Activated B cell treated with CpG ODN at 0.5 μM for 24 hours (primary cell): ENCODE measurements at regions of chr20 and their contacts with region 1.

Region 1: DNA sequence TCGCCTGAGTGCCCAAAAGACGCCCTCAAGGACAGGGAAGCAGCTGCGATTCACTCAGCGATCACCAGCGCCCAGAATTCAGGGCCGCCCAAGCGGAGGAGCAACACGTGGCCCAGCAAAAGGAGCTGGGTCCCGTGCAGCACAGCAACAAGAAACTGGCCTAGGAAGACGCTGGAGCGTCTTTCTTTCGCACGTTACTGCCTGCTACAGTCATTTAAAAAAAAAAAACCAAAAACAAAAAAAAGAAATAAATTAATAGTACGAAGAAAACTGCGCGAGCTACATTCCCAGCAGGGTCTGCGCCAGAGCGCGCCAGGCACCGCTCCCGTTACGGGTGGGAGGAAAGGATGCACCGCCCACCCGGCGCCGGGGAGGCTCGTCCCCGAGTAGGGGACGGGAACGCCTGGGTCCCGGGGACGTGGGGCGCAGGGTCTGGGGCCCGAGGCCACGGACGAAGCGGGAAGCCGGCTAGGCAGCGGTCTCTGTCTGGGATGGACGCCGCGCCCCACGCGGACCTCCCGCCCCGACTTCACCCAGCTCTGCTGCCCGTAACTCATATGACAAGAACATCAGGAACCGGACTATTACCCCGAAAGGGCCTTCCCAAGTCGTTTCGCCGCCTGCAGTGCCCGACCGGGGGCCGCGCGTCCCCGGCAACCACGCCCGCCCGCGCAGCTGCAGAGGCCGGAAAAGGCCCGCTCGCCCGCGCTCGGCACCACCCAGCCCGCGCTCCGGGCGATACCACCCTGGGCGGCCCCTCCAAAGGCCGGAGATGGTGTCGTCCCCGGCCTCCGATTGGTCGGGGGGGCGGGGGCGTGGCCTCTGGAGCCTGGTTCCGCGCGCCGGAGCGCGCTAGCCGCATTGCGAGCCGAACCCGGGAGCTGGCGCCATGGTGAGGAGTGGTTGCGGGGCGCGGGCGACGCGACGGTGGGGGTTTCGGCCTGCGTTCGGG is at the start of gene NOP56:
- DNase-seq: peak; percentile 97
- ATAC-seq: peak; percentile 90
- H3K4me3 Mint-ChIP-seq: peak within 1 kb of the TSS; percentile 90
- H3K27ac Mint-ChIP-seq: peak within 1 kb of the TSS; percentile 93
- H3K4me1 Mint-ChIP-seq: peaks cover 19% of the 10 kb centered on the region
- H3K27me3 Mint-ChIP-seq: no peaks in the 10 kb centered on the region
- CTCF ChIP-seq: no peak
- total RNA-seq, gene NOP56: 327 and 333 TPM in 2 replicates

Region 2: GRCh38 chr20:1466211-1467081 is 1185.6 kb before region 1 on chr20 and contains the start of gene NSFL1C:
- CTCF ChIA-PET with region 1: no interaction called
- POLR2A ChIA-PET with region 1: interaction called, 3 read pairs
- intact Hi-C with region 1: loop called (anchors 10 kb)
- DNase-seq: peak; percentile 100
- ATAC-seq: peak; percentile 92
- H3K4me3 Mint-ChIP-seq: peak within 1 kb of the TSS; percentile 86
- H3K27ac Mint-ChIP-seq: peak within 1 kb of the TSS; percentile 89
- H3K4me1 Mint-ChIP-seq: peaks cover 81% of the 10 kb centered on the region
- H3K27me3 Mint-ChIP-seq: no peaks in the 10 kb centered on the region
- CTCF ChIP-seq: peak; percentile 93
- total RNA-seq, gene NSFL1C: 81.7 and 89.4 TPM in 2 replicates

Region 3: DNA sequence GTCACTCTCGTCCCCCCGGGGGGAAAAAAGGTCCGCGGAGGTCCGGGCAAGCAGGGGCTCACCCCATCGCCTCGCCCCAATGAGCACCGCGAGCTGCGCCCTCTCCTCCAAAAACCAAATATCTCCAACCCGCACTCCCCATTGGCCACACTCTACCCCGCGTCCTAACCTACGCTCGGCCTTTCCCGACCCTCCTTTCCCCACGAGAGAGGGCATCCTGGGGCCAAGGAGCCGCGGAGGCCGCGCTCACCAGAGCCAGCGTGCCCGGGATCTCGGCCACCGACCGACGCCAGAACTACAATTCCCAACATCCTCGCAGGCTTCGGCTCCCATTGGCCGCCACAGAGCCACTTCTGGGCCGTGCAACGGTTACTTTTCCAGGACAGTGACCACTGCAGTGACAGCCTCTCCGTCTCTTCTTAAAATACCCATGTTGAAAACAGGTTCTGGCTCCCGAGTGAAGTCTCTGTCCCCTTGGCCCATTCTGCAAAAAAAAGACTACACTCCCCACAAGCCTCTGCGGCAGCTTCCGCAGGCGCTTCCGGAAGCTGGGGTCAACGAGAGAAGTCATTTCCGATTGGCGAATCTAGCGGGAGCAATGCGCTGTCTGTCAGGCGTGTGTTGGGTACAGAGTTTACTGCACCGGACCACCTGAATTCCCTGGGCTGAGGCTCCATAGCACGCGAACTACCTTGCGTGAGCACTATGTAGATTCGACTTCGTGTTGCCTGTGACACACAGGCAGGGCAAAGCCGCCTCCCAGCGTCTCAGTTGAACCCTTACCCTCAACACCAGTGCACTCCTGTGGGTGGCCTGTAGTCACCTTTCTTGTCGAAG is 143.2 kb before region 1 on chr20 and contains the start of gene ZNF343:
- CTCF ChIA-PET with region 1: no interaction called
- POLR2A ChIA-PET with region 1: interaction called, 4 read pairs
- intact Hi-C with region 1: loop called (anchors 5 kb)
- DNase-seq: peak; percentile 72
- ATAC-seq: peak; percentile 93
- H3K4me3 Mint-ChIP-seq: peak within 1 kb of the TSS; percentile 100
- H3K27ac Mint-ChIP-seq: peak within 1 kb of the TSS; percentile 96
- H3K4me1 Mint-ChIP-seq: peaks cover 23% of the 10 kb centered on the region
- H3K27me3 Mint-ChIP-seq: peaks cover 18% of the 10 kb centered on the region
- CTCF ChIP-seq: no peak
- total RNA-seq, gene ZNF343: 14.8 and 16.6 TPM in 2 replicates

Region 4: GRCh38 chr20:2599288-2600006 is 52.6 kb before region 1 on chr20:
- CTCF ChIA-PET with region 1: no interaction called
- POLR2A ChIA-PET with region 1: no interaction called
- intact Hi-C with region 1: no loop called
- DNase-seq: no peak
- ATAC-seq: no peak
- H3K4me3 Mint-ChIP-seq: no peak overlapping the region
- H3K27ac Mint-ChIP-seq: no peak overlapping the region
- H3K4me1 Mint-ChIP-seq: no peaks in the 10 kb centered on the region
- H3K27me3 Mint-ChIP-seq: peaks cover 30% of the 10 kb centered on the region
- CTCF ChIP-seq: no peak

Region 5: GRCh38 chr20:2688041-2688591 is 36.1 kb after region 1 on chr20:
- CTCF ChIA-PET with region 1: no interaction called
- POLR2A ChIA-PET with region 1: interaction called, 5 read pairs
- intact Hi-C with region 1: loop called (anchors 5 kb)
- DNase-seq: no peak
- ATAC-seq: peak; percentile 16
- H3K4me3 Mint-ChIP-seq: no peak overlapping the region
- H3K27ac Mint-ChIP-seq: no peak overlapping the region
- H3K4me1 Mint-ChIP-seq: peaks cover 13% of the 10 kb centered on the region
- H3K27me3 Mint-ChIP-seq: peaks cover 46% of the 10 kb centered on the region
- CTCF ChIP-seq: no peak

Region 6: GRCh38 chr20:2873010-2873746 is 221.1 kb after region 1 on chr20 and contains the start of gene PTPRA:
- CTCF ChIA-PET with region 1: no interaction called
- POLR2A ChIA-PET with region 1: interaction called, 3 read pairs
- intact Hi-C with region 1: loop called (anchors 2 kb)
- DNase-seq: peak; percentile 90
- ATAC-seq: peak; percentile 94
- H3K4me3 Mint-ChIP-seq: peak within 1 kb of the TSS; percentile 94
- H3K27ac Mint-ChIP-seq: peak within 1 kb of the TSS; percentile 80
- H3K4me1 Mint-ChIP-seq: peaks cover 38% of the 10 kb centered on the region
- H3K27me3 Mint-ChIP-seq: peaks cover 4% of the 10 kb centered on the region
- CTCF ChIP-seq: no peak
- total RNA-seq, gene PTPRA: 43.6 and 46.7 TPM in 2 replicates